GM12878 (cell line): ENCODE measurements at regions of chr10 and their contacts with region 1.

Region 1: GRCh38 chr10:13743101-13743693 is 156.4 kb downstream of the PRPF18 start:
- DNase-seq: peak; percentile 46
- ATAC-seq: peak; percentile 39
- H3K4me3 ChIP-seq: no peak overlapping the region; the same call in 1 of the 2 replicates
- H3K27ac ChIP-seq: peak overlapping the region; percentile 86
- H3K4me1 ChIP-seq: peaks cover 56% of the 10 kb centered on the region
- H3K27me3 ChIP-seq: no peaks in the 10 kb centered on the region
- CTCF ChIP-seq: no peak
- EP300 ChIP-seq: peak in 1 of 2 experiments; percentile 17; a peak in 1 of 4 replicates
- POLR2A ChIP-seq: peak; percentile 40; the same call in 1 of the 2 replicates
- RAD21 ChIP-seq: 0 out of 2 replicates have a peak, but pooled peaks have one; percentile 3

Region 2: DNA sequence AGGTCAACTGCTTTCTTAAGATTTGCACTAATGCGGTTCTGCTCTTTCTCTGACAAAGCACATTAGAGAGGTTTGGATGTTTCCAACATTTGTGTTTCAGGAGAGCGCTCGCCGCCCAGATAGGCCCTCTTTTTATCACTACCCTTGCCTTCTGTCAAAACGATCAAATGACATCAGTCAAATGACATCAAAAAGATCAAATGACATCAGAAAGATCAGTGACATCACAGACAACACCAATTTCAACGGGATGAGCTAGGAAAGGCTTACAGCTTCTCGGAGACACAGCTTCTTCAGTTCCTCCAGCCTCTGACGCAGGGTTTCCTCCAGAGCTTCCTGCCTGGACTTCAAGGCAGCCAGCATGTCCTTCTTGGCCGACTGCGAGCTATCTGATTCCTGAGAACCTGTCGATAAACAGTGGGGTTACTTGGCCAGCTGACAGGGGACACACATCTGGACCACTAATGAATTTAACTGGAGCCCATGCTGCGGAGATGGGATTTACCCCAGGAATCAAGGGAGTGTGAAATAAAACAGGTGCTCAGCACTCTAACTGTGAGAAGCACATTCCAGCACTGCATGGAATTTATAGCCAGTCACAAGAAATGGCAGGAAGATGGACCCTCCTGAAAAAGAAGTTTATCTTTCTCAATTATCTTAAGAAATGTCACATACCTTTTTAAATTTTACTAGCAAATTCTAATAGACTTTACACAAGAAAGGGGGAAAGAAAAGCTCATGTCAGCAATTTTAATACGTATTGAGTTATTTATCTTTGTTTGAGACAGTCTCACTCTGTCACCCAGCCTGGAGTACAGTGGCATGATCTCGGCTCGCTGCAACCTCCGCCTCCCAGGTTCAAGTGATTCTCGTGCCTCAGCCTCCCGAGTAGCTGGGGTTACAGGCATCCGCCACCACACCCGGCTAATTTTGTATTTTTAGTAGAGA is 68.3 kb before region 1 on chr10:
- CTCF ChIA-PET with region 1: no interaction called
- POLR2A ChIA-PET with region 1: no interaction called
- RAD21 ChIA-PET with region 1: no interaction called
- SMC1A ChIA-PET with region 1: no interaction called
- in situ Hi-C with region 1: no loop called
- intact Hi-C with region 1: no loop called
- DNase-seq: no peak
- ATAC-seq: no peak
- H3K4me3 ChIP-seq: no peak overlapping the region
- H3K27ac ChIP-seq: no peak overlapping the region
- H3K4me1 ChIP-seq: no peaks in the 10 kb centered on the region
- H3K27me3 ChIP-seq: no peaks in the 10 kb centered on the region
- CTCF ChIP-seq: no peak
- EP300 ChIP-seq: no peak
- POLR2A ChIP-seq: no peak
- RAD21 ChIP-seq: no peak

Region 3: DNA sequence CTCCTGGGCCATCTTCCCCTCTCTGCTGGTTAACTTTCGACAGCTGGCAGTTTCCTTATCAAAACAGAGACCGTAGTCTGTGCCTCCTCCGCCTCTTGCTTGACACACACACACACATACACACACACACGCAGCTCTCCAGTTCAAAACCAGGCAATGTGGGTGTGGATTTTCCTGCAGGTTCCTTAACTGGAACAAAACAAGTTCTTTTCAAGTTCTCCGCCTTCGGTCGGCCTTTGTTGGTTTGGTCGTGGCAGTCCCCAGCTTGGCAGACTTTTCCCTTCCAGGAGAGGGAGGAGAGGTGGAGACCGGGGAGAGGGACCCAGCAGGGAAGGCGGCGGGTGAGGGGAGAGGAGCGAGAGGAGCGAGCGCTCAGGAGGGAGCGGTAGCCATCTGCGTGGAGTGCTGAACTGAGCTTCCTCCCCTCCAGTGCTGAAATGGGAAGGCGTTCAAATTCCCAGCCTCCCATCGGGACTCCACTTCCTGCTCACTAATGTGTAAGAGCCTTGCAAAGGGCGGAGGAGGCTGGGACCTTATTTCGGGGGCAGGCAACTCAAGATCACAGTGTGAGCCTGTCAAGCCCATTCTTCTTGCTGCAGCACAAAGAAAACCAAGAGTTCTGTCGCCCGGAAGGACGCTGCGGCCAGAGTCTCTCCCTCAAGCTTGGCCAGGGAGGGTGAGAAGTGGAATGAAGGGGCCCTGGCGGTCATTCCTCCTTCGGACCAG is 35.9 kb before region 1 on chr10:
- CTCF ChIA-PET with region 1: interaction called, 4 read pairs
- POLR2A ChIA-PET with region 1: interaction called, 19 read pairs
- RAD21 ChIA-PET with region 1: interaction called, 14 read pairs
- SMC1A ChIA-PET with region 1: interaction called, 38 read pairs
- in situ Hi-C with region 1: no loop called
- intact Hi-C with region 1: loop called (anchors 5 kb)
- DNase-seq: no peak
- ATAC-seq: peak; percentile 77
- H3K4me3 ChIP-seq: peak overlapping the region; percentile 86
- H3K27ac ChIP-seq: peak overlapping the region; percentile 92
- H3K4me1 ChIP-seq: peaks cover 25% of the 10 kb centered on the region
- H3K27me3 ChIP-seq: no peaks in the 10 kb centered on the region
- CTCF ChIP-seq: no peak
- EP300 ChIP-seq: no peak
- POLR2A ChIP-seq: peak; percentile 65
- RAD21 ChIP-seq: no peak; the same call in 1 of the 2 replicates

Region 4: DNA sequence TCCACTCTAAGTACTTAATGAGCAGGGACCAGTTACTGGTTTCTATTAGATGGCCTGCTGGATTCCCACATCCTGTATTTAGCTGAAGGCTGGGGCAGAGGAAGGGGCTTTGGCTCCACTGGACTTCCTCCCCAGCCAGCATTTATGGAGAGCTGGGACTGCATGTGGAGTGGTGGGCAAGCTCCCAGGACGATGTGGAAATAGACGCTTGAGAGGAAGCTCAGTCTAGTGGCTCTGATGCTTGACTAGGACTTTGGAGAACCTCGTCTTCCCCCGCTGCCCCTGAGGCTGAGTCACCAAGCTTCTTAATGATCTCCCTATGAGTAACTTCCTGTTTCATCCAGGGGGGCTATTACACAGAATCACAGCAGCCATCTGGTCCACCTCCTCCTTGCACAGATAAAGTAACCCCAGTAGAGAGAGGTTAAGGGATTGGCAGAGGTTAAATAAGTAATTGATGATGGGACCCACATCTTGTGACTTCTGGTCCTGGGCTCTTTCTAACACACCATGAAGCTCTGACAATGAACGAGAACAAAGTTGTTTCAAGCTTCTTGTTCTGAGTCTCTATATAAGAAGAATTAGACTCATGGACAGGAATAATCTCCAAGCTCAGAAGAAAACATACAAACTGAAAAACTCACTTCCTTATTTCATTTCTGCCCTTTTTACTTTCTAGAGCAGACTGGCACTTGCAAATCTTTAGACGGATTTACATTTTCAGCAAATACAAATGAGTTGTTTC is 30.2 kb before region 1 on chr10:
- CTCF ChIA-PET with region 1: interaction called, 3 read pairs
- POLR2A ChIA-PET with region 1: interaction called, 19 read pairs
- RAD21 ChIA-PET with region 1: interaction called, 14 read pairs
- SMC1A ChIA-PET with region 1: interaction called, 38 read pairs
- in situ Hi-C with region 1: no loop called
- intact Hi-C with region 1: loop called (anchors 5 kb)
- DNase-seq: peak; percentile 82
- ATAC-seq: peak; percentile 91
- H3K4me3 ChIP-seq: peak overlapping the region; percentile 17; the same call in 1 of the 2 replicates
- H3K27ac ChIP-seq: peak overlapping the region; percentile 97
- H3K4me1 ChIP-seq: peaks cover 41% of the 10 kb centered on the region
- H3K27me3 ChIP-seq: no peaks in the 10 kb centered on the region
- CTCF ChIP-seq: no peak
- EP300 ChIP-seq: peak; percentile 18 to 43; a peak in 2 of 4 replicates
- POLR2A ChIP-seq: peak; percentile 59; the same call in 1 of the 2 replicates
- RAD21 ChIP-seq: no peak

Region 5: GRCh38 chr10:13717931-13718772 is 25.0 kb before region 1 on chr10:
- CTCF ChIA-PET with region 1: no interaction called
- POLR2A ChIA-PET with region 1: interaction called, 7 read pairs
- RAD21 ChIA-PET with region 1: interaction called, 14 read pairs
- SMC1A ChIA-PET with region 1: interaction called, 38 read pairs
- in situ Hi-C with region 1: no loop called
- intact Hi-C with region 1: no loop called
- DNase-seq: no peak
- ATAC-seq: peak; percentile 52
- H3K4me3 ChIP-seq: peak overlapping the region; percentile 23
- H3K27ac ChIP-seq: peak overlapping the region; percentile 87
- H3K4me1 ChIP-seq: peaks cover 29% of the 10 kb centered on the region
- H3K27me3 ChIP-seq: no peaks in the 10 kb centered on the region
- CTCF ChIP-seq: no peak
- EP300 ChIP-seq: no peak
- POLR2A ChIP-seq: 0 out of 2 replicates have a peak, but pooled peaks have one; percentile 23
- RAD21 ChIP-seq: no peak

Region 6: DNA sequence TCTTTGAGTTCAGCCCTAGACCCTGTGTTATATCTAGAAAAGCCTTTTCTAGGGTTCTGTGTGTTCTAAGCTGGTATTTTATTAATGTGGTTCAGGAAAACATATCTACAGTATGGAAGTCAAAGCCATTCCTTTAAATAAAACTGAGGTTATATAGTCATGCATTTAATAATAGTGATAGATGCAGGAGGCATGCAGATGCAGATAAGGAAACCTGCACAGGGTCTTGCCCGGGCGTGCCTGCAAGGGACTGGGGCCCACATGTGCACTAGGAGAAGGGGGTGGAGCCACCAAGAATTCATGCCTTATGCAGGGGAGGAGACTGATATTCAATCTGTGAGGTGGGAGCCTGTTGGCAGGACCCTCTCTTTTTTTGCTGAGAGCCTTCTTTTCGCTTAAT is 15.1 kb after region 1 on chr10:
- CTCF ChIA-PET with region 1: interaction called, 8 read pairs
- POLR2A ChIA-PET with region 1: interaction called, 24 read pairs
- RAD21 ChIA-PET with region 1: interaction called, 382 read pairs
- SMC1A ChIA-PET with region 1: interaction called, 399 read pairs
- in situ Hi-C with region 1: no loop called
- intact Hi-C with region 1: loop called (anchors 1 kb)
- DNase-seq: no peak
- ATAC-seq: peak; percentile 58
- H3K4me3 ChIP-seq: no peak overlapping the region
- H3K27ac ChIP-seq: peak overlapping the region; percentile 100
- H3K4me1 ChIP-seq: peaks cover 80% of the 10 kb centered on the region
- H3K27me3 ChIP-seq: no peaks in the 10 kb centered on the region
- CTCF ChIP-seq: no peak
- EP300 ChIP-seq: no peak
- POLR2A ChIP-seq: no peak
- RAD21 ChIP-seq: no peak

Region 7: DNA sequence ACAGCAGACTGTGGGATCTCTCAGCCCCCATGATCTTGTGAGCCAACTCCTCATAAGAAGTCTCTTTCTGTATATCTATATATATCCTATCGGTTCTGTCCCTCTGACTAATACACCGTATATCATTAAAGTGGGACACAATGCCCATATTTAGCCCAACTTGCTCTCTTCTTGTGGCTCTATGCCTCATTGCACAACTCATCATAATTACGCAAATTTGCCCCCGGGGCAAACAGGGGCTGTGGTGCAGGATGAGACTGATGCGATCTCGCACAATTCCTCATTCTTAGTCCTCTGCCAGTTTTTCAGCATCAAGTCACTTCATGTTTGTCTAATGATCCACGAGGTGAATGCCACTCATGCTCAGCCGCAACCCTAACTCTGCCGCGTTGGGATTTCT is 26.8 kb after region 1 on chr10:
- CTCF ChIA-PET with region 1: interaction called, 5 read pairs
- POLR2A ChIA-PET with region 1: interaction called, 43 read pairs
- RAD21 ChIA-PET with region 1: interaction called, 382 read pairs
- SMC1A ChIA-PET with region 1: interaction called, 399 read pairs
- in situ Hi-C with region 1: no loop called
- intact Hi-C with region 1: no loop called
- DNase-seq: no peak
- ATAC-seq: peak; percentile 78
- H3K4me3 ChIP-seq: no peak overlapping the region
- H3K27ac ChIP-seq: no peak overlapping the region
- H3K4me1 ChIP-seq: peaks cover 11% of the 10 kb centered on the region
- H3K27me3 ChIP-seq: no peaks in the 10 kb centered on the region
- CTCF ChIP-seq: no peak
- EP300 ChIP-seq: peak; percentile 14 to 25; a peak in 2 of 4 replicates
- POLR2A ChIP-seq: no peak
- RAD21 ChIP-seq: no peak

Region 8: GRCh38 chr10:14039968-14040671 is 296.9 kb after region 1 on chr10:
- CTCF ChIA-PET with region 1: no interaction called
- POLR2A ChIA-PET with region 1: interaction called, 12 read pairs
- RAD21 ChIA-PET with region 1: no interaction called
- SMC1A ChIA-PET with region 1: no interaction called
- in situ Hi-C with region 1: no loop called
- intact Hi-C with region 1: no loop called
- DNase-seq: no peak
- ATAC-seq: no peak
- H3K4me3 ChIP-seq: no peak overlapping the region
- H3K27ac ChIP-seq: no peak overlapping the region
- H3K4me1 ChIP-seq: peaks cover 5% of the 10 kb centered on the region; the same call in 1 of the 2 replicates
- H3K27me3 ChIP-seq: no peaks in the 10 kb centered on the region
- CTCF ChIP-seq: no peak
- EP300 ChIP-seq: no peak
- POLR2A ChIP-seq: no peak
- RAD21 ChIP-seq: no peak